Activated B cell treated with CpG ODN at 0.5 μM for 24 hours (primary cell): ENCODE measurements at regions of chr12 and their contacts with region 1.

Region 1: DNA sequence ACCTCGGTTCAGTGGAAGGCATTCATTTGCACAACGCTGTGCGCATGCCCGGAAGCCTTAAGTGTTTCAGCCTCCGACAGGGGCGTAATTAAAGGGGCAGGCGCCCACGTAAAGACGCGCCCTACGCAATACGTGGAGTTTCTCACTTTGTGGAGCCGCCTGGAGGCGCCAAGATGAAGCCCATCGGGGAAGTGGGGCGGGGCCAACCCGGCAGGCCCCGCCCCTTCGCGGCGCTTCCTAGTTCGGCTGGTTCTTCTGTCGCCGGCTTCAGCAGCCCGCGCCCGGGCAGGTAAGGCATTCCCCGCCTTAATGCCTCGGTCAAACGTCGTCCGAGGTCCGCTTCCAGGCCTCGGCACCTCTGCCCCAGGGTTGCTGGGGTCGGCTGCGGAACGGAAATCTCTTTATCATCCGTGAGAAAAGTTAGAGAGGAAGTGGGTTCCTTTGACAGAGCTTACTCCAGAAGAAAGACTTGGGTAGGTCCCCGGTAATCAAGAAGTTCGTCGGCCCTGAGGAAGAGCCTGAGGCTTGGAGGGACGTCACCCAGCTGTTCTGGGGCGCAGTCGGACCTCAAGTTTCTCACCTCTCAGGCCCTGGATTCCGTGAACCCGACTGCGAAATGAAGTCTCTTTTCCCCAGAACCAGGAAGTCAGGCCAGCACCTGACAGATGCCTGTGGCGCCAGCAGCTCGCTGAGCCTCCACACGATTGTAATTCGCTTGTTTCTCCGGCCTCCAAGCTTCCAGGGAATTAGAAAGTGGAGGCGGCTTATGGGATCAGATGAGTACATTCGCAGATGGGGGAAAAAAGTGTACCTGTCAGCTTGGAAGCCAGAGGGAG is at the starts of genes IRAK4 and PUS7L:
- DNase-seq: peak; percentile 83
- ATAC-seq: peak; percentile 98
- H3K4me3 Mint-ChIP-seq: peak within 1 kb of the TSS; percentile 98
- H3K27ac Mint-ChIP-seq: peak within 1 kb of the TSS; percentile 97
- H3K4me1 Mint-ChIP-seq: peaks cover 68% of the 10 kb centered on the region
- H3K27me3 Mint-ChIP-seq: no peaks in the 10 kb centered on the region
- CTCF ChIP-seq: no peak
- total RNA-seq, gene IRAK4: 38.4 and 40.8 TPM in 2 replicates
- total RNA-seq, gene PUS7L: 16.1 and 19.9 TPM in 2 replicates

Region 2: GRCh38 chr12:43728117-43728516 is 30.8 kb before region 1 on chr12:
- CTCF ChIA-PET with region 1: no interaction called
- POLR2A ChIA-PET with region 1: no interaction called
- intact Hi-C with region 1: no loop called
- DNase-seq: no peak
- ATAC-seq: no peak
- H3K4me3 Mint-ChIP-seq: no peak overlapping the region
- H3K27ac Mint-ChIP-seq: no peak overlapping the region
- H3K4me1 Mint-ChIP-seq: no peaks in the 10 kb centered on the region
- H3K27me3 Mint-ChIP-seq: no peaks in the 10 kb centered on the region
- CTCF ChIP-seq: no peak

Region 3: GRCh38 chr12:43776498-43776897 is 17.6 kb after region 1 on chr12:
- CTCF ChIA-PET with region 1: interaction called, 6 read pairs
- POLR2A ChIA-PET with region 1: interaction called, 9 read pairs
- intact Hi-C with region 1: loop called (anchors 1 kb)
- DNase-seq: no peak
- ATAC-seq: peak; percentile 37
- H3K4me3 Mint-ChIP-seq: no peak overlapping the region
- H3K27ac Mint-ChIP-seq: no peak overlapping the region
- H3K4me1 Mint-ChIP-seq: no peaks in the 10 kb centered on the region
- H3K27me3 Mint-ChIP-seq: no peaks in the 10 kb centered on the region
- CTCF ChIP-seq: no peak

Region 4: GRCh38 chr12:43789941-43790340 is 31.0 kb after region 1 on chr12:
- CTCF ChIA-PET with region 1: no interaction called
- POLR2A ChIA-PET with region 1: no interaction called
- intact Hi-C with region 1: no loop called
- DNase-seq: no peak
- ATAC-seq: no peak
- H3K4me3 Mint-ChIP-seq: no peak overlapping the region
- H3K27ac Mint-ChIP-seq: no peak overlapping the region
- H3K4me1 Mint-ChIP-seq: peaks cover 5% of the 10 kb centered on the region
- H3K27me3 Mint-ChIP-seq: no peaks in the 10 kb centered on the region
- CTCF ChIP-seq: no peak

Region 5: GRCh38 chr12:43835656-43836474 is 76.9 kb after region 1 on chr12 and contains the start of gene TMEM117:
- CTCF ChIA-PET with region 1: no interaction called
- POLR2A ChIA-PET with region 1: interaction called, 13 read pairs
- intact Hi-C with region 1: loop called (anchors 1 kb)
- DNase-seq: peak; percentile 72
- ATAC-seq: peak; percentile 77
- H3K4me3 Mint-ChIP-seq: peak within 1 kb of the TSS; percentile 86
- H3K27ac Mint-ChIP-seq: peak within 1 kb of the TSS; percentile 84
- H3K4me1 Mint-ChIP-seq: peaks cover 17% of the 10 kb centered on the region
- H3K27me3 Mint-ChIP-seq: no peaks in the 10 kb centered on the region
- CTCF ChIP-seq: no peak
- total RNA-seq, gene TMEM117: 3.5 and 4.8 TPM in 2 replicates